HCT116 (cell line): ENCODE measurements at regions of chr6 and their contacts with region 1.

Region 1: GRCh38 chr6:30814136-30815040 is 69.9 kb upstream of the DDR1 start:
- DNase-seq: peak; percentile 88
- ATAC-seq: peak; percentile 54
- H3K4me3 ChIP-seq: peak overlapping the region in 1 of 2 experiments; percentile 32; a peak in 2 of 4 replicates
- H3K27ac ChIP-seq: peak overlapping the region; percentile 97
- H3K4me1 ChIP-seq: peaks cover 76 to 88% of the 10 kb centered on the region in 2 experiments
- H3K27me3 ChIP-seq: no peaks in the 10 kb centered on the region
- CTCF ChIP-seq: no peak
- POLR2A ChIP-seq: no peak
- RAD21 ChIP-seq: no peak

Region 2: GRCh38 chr6:30616811-30617564 is 197.4 kb before region 1 on chr6 and contains the start of gene PPP1R10:
- CTCF ChIA-PET with region 1: no interaction called
- POLR2A ChIA-PET with region 1: no interaction called
- RAD21 ChIA-PET with region 1: no interaction called
- intact Hi-C with region 1: loop called (anchors 10 kb)
- DNase-seq: peak; percentile 100
- ATAC-seq: peak; percentile 81
- H3K4me3 ChIP-seq: peak within 1 kb of the TSS; percentile 92 to 94
- H3K27ac ChIP-seq: peak within 1 kb of the TSS; percentile 87
- H3K4me1 ChIP-seq: peaks cover 13 to 40% of the 10 kb centered on the region in 2 experiments
- H3K27me3 ChIP-seq: no peaks in the 10 kb centered on the region
- CTCF ChIP-seq: no peak
- POLR2A ChIP-seq: peak; percentile 99
- RAD21 ChIP-seq: no peak
- total RNA-seq, gene PPP1R10: 104 TPM

Region 3: DNA sequence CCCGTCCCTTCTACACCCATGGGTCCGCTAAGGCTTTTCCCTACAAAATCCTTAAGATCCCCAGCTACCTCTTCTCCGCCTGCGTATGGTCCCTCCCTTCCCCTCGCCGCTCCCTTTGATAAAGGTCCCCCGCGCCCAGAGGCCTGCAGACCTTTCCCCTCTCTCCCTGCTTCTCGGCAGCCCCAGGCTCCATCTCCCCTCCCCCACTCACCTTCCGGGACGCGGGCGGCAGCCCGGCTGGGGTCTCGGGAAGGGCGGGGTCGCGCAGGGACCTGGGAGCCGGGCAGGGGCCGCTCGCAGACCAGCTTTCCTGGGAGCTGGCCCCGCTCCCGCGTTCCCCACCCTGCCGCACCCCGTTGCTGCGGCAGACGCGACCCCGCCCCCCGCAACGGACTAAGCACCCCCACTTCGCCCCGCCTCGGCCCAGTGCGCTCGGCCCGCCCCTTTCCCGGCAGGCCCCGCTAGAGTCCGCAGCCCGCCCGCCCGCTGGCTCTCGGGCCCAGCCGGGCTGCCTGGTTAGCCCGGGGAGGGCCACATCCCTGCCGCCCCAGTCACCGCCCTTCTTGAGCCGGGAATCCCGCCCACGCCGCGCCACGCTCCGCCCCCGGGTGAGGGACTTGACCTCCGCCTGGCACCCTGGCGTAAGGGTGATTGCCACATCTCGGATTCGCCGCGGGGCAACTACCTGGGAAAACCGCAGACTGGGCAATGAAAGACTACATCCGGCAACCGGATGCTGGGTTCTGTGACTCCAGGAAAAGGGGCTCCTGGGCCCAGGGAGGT is 71.9 kb before region 1 on chr6 and contains the start of gene FLOT1:
- CTCF ChIA-PET with region 1: no interaction called
- POLR2A ChIA-PET with region 1: interaction called, 680 read pairs
- RAD21 ChIA-PET with region 1: no interaction called
- intact Hi-C with region 1: loop called (anchors 1 kb)
- DNase-seq: peak; percentile 94
- ATAC-seq: peak; percentile 70
- H3K4me3 ChIP-seq: peak within 1 kb of the TSS; percentile 79 to 85
- H3K27ac ChIP-seq: peak within 1 kb of the TSS; percentile 93
- H3K4me1 ChIP-seq: peaks cover 37 to 79% of the 10 kb centered on the region in 2 experiments
- H3K27me3 ChIP-seq: no peaks in the 10 kb centered on the region
- CTCF ChIP-seq: no peak
- POLR2A ChIP-seq: peak; percentile 98
- RAD21 ChIP-seq: no peak
- total RNA-seq, gene FLOT1: 117 TPM

Region 4: GRCh38 chr6:30759575-30760239 is 54.7 kb before region 1 on chr6:
- CTCF ChIA-PET with region 1: no interaction called
- POLR2A ChIA-PET with region 1: interaction called, 12 read pairs
- RAD21 ChIA-PET with region 1: interaction called in 1 of 2 experiments, 4 read pairs
- intact Hi-C with region 1: no loop called
- DNase-seq: no peak
- ATAC-seq: no peak
- H3K4me3 ChIP-seq: no peak overlapping the region
- H3K27ac ChIP-seq: no peak overlapping the region; the same call in 1 of the 2 replicates
- H3K4me1 ChIP-seq: peaks cover 56 to 87% of the 10 kb centered on the region in 2 experiments
- H3K27me3 ChIP-seq: no peaks in the 10 kb centered on the region
- CTCF ChIP-seq: no peak
- POLR2A ChIP-seq: no peak
- RAD21 ChIP-seq: no peak

Region 5: GRCh38 chr6:30775104-30775503 is 39.3 kb before region 1 on chr6:
- CTCF ChIA-PET with region 1: interaction called, 4 read pairs
- POLR2A ChIA-PET with region 1: interaction called, 80 read pairs
- RAD21 ChIA-PET with region 1: no interaction called
- intact Hi-C with region 1: no loop called
- DNase-seq: no peak
- ATAC-seq: 0 out of 2 replicates have a peak, but pooled peaks have one; percentile 4
- H3K4me3 ChIP-seq: no peak overlapping the region
- H3K27ac ChIP-seq: no peak overlapping the region; the same call in 1 of the 2 replicates
- H3K4me1 ChIP-seq: peaks cover 62 to 78% of the 10 kb centered on the region in 2 experiments
- H3K27me3 ChIP-seq: no peaks in the 10 kb centered on the region
- CTCF ChIP-seq: no peak
- POLR2A ChIP-seq: no peak
- RAD21 ChIP-seq: no peak

Region 6: DNA sequence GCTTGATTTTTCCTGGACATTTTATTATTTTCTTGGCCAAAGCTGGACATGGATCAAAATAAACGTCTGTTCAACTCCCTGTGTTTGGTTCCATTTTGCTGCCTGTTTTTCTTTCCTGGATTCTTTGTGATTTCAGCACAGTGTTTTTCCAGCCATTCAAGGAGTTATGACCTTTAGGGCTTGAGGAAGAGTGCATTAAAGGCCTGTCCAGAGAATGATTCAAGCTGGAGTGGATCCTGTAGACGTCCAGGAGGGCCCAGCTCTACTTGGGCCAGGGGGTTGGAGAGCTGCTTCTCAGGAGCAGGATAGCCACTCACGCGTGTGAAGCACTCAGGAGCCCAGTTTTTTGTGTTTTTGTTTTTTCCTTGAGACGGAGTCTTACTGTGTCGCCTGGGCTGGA is 13.5 kb before region 1 on chr6:
- CTCF ChIA-PET with region 1: no interaction called
- POLR2A ChIA-PET with region 1: interaction called, 94 read pairs
- RAD21 ChIA-PET with region 1: no interaction called
- intact Hi-C with region 1: no loop called
- DNase-seq: no peak
- ATAC-seq: no peak
- H3K4me3 ChIP-seq: no peak overlapping the region
- H3K27ac ChIP-seq: no peak overlapping the region
- H3K4me1 ChIP-seq: peaks cover 23 to 40% of the 10 kb centered on the region in 2 experiments; a peak in 3 of 4 replicates
- H3K27me3 ChIP-seq: no peaks in the 10 kb centered on the region
- CTCF ChIP-seq: no peak
- POLR2A ChIP-seq: no peak
- RAD21 ChIP-seq: no peak

Region 7: GRCh38 chr6:31619805-31620585 is 805.6 kb after region 1 on chr6:
- CTCF ChIA-PET with region 1: no interaction called
- POLR2A ChIA-PET with region 1: no interaction called
- RAD21 ChIA-PET with region 1: no interaction called
- intact Hi-C with region 1: no loop called
- DNase-seq: peak; percentile 98
- ATAC-seq: peak; percentile 92
- H3K4me3 ChIP-seq: peak overlapping the region; percentile 57 to 61
- H3K27ac ChIP-seq: peak overlapping the region; percentile 77
- H3K4me1 ChIP-seq: peaks cover 6 to 18% of the 10 kb centered on the region in 2 experiments; a peak in 3 of 4 replicates
- H3K27me3 ChIP-seq: no peaks in the 10 kb centered on the region
- CTCF ChIP-seq: no peak
- POLR2A ChIP-seq: peak; percentile 68
- RAD21 ChIP-seq: no peak